Psoas muscle (tissue), 8 donors: ENCODE measurements at regions of chr10 and their contacts with region 1.

Region 1: GRCh38 chr10:109679478-109679877 is 243.8 kb downstream of the XPNPEP1 start:
- DNase-seq: no peak
- ATAC-seq: no peak
- H3K4me3 ChIP-seq: no peak overlapping the region
- H3K27ac ChIP-seq: no peak overlapping the region
- H3K4me1 ChIP-seq: no peaks in the 10 kb centered on the region
- H3K27me3 ChIP-seq: no peaks in the 10 kb centered on the region
- CTCF ChIP-seq: no peak

Region 2: GRCh38 chr10:109640935-109641334 is 38.5 kb before region 1 on chr10:
- intact Hi-C with region 1: no loop called
- DNase-seq: no peak
- ATAC-seq: no peak
- H3K4me3 ChIP-seq: no peak overlapping the region
- H3K27ac ChIP-seq: no peak overlapping the region
- H3K4me1 ChIP-seq: no peaks in the 10 kb centered on the region
- H3K27me3 ChIP-seq: no peaks in the 10 kb centered on the region
- CTCF ChIP-seq: no peak

Region 3: GRCh38 chr10:109701633-109702215 is 22.2 kb after region 1 on chr10:
- intact Hi-C with region 1: loop called in 1 of 2 experiments (anchors 2 kb)
- DNase-seq: no peak
- ATAC-seq: no peak
- H3K4me3 ChIP-seq: no peak overlapping the region
- H3K27ac ChIP-seq: no peak overlapping the region
- H3K4me1 ChIP-seq: no peaks in the 10 kb centered on the region
- H3K27me3 ChIP-seq: no peaks in the 10 kb centered on the region
- CTCF ChIP-seq: no peak